Ascending aorta (tissue), 2 donors: ENCODE measurements at regions of chr3 and their contacts with region 1.

Region 1: GRCh38 chr3:141231101-141231935 is at the start of gene PXYLP1:
- DNase-seq: peak; percentile 77 to 97
- H3K4me3 ChIP-seq: peak within 1 kb of the TSS; percentile 61 to 96
- H3K27ac ChIP-seq: peak within 1 kb of the TSS; percentile 79 to 85
- H3K4me1 ChIP-seq: peaks cover 0 to 11% of the 10 kb centered on the region in 2 donors
- H3K27me3 ChIP-seq: no peaks in the 10 kb centered on the region
- CTCF ChIP-seq: peak; percentile 27 to 97 (median 46)
- total RNA-seq, gene PXYLP1: 14.2 TPM

Region 2: DNA sequence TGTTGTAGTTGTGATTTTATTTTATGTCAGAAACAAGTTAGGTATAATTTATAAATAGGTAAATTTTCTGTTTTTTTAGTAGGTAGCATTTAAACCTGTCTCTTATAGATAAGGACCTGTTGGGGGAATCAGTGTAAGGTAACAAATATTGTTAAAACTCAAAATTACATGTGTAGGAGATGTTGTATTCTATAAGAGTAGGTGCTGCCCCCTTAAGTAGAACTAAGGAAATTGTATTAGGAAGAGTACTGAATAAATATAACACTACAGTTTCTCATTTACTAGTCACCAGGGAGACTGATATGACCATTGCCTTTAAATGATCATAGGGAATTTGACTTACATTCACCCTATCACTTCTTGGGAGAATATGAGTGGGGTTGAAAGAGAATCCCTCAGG is 258.5 kb before region 1 on chr3:
- intact Hi-C with region 1: no loop called
- DNase-seq: no peak
- H3K4me3 ChIP-seq: no peak overlapping the region
- H3K27ac ChIP-seq: no peak overlapping the region
- H3K4me1 ChIP-seq: no peaks in the 10 kb centered on the region
- H3K27me3 ChIP-seq: no peaks in the 10 kb centered on the region
- CTCF ChIP-seq: peak in 1 of 3 experiments; percentile 18

Region 3: GRCh38 chr3:141084250-141084649 is 147.1 kb before region 1 on chr3:
- intact Hi-C with region 1: no loop called
- DNase-seq: no peak
- H3K4me3 ChIP-seq: no peak overlapping the region
- H3K27ac ChIP-seq: peak overlapping the region; percentile 61 to 76
- H3K4me1 ChIP-seq: peaks cover 0 to 9% of the 10 kb centered on the region in 2 donors
- H3K27me3 ChIP-seq: no peaks in the 10 kb centered on the region
- CTCF ChIP-seq: no peak

Region 4: DNA sequence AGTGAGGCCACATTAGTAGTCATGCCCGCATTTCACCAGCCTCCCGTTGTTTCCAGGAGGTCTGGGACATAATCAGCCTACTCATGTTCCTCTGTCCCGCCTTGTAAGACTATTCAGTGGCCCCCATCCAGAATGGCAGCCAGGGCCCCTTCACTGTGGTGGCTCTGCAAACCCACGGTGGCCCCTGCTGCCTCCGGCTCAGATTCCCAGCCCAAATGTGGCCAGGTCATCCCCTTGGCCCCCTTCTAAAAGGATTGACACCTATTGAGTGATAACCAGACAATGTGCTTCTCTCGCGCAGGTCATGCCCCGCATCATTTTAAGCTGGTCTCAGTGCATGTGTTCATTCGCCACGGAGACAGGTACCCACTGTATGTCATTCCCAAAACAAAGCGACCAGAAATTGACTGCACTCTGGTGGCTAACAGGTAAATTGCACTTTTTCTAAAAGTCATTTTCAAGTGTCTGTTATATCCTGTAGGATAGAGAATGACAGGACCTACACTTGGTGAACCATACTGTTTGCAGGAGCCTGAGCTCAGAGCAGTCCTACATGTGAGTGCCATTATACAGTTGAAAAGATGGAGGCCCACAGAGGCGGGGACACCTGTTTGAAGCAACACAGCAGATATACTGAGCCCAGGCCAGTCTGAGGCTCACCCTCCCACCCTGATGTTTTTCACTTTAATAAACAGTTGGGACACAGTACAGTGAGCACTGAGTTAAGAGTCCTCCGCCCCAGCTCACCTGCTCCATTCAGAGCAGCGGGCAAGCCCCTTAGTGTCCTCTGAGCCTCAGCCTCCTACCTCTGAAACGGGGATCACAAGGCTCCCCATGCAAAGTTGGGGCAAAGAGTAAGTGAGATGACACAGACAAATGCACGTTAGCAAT is 48.0 kb after region 1 on chr3:
- intact Hi-C with region 1: loop called (anchors 1 kb)
- DNase-seq: peak in 1 of 2 donors; percentile 63
- H3K4me3 ChIP-seq: no peak overlapping the region
- H3K27ac ChIP-seq: peak overlapping the region; percentile 83
- H3K4me1 ChIP-seq: peaks cover 12 to 23% of the 10 kb centered on the region in 2 donors
- H3K27me3 ChIP-seq: no peaks in the 10 kb centered on the region
- CTCF ChIP-seq: peak; percentile 57 to 69 (median 57)

Region 5: GRCh38 chr3:141311496-141312353 is 80.4 kb after region 1 on chr3:
- intact Hi-C with region 1: loop called (anchors 2 kb)
- DNase-seq: peak; percentile 95 to 99
- H3K4me3 ChIP-seq: peak overlapping the region; percentile 59 to 89
- H3K27ac ChIP-seq: peak overlapping the region; percentile 63 to 82
- H3K4me1 ChIP-seq: peaks cover 0 to 8% of the 10 kb centered on the region in 2 donors
- H3K27me3 ChIP-seq: no peaks in the 10 kb centered on the region
- CTCF ChIP-seq: peak; percentile 72 to 85 (median 76)

Region 6: GRCh38 chr3:141452036-141452435 is 220.7 kb after region 1 on chr3:
- intact Hi-C with region 1: loop called (anchors 2 kb)
- DNase-seq: no peak
- H3K4me3 ChIP-seq: no peak overlapping the region
- H3K27ac ChIP-seq: peak overlapping the region; percentile 20 to 27
- H3K4me1 ChIP-seq: peaks cover 0 to 26% of the 10 kb centered on the region in 2 donors
- H3K27me3 ChIP-seq: no peaks in the 10 kb centered on the region
- CTCF ChIP-seq: peak; percentile 66 to 86 (median 73)

Region 7: DNA sequence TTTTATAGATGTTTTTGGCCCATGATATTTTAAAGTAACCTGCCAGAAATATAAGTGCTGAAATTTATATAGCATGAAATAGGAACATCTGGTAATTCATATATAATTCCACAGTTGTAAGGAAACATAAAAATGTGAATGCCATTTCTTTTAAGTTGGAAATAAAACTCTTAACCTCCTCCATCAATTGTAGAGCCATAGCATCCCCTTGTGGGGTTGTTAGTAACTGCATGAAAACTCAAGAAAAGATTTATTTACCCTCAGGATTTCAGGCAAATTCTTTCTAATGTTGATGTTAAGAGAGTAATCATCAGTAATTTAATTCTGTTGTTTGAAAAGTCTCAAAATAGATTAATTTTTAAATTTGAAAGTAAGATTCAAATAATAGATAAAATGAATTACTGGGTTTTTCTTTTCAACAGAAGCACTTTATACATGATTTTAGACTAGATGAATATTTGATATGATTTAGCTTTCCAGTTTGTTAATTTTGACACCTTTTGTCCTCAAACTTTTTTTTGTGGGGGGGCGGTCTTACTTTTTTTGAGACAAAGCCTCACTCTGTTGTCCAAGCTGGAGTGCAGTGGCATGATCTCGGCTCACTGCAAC is 330.2 kb after region 1 on chr3:
- intact Hi-C with region 1: loop called (anchors 5 kb)
- DNase-seq: no peak
- H3K4me3 ChIP-seq: no peak overlapping the region
- H3K27ac ChIP-seq: no peak overlapping the region
- H3K4me1 ChIP-seq: no peaks in the 10 kb centered on the region
- H3K27me3 ChIP-seq: no peaks in the 10 kb centered on the region
- CTCF ChIP-seq: peak; percentile 91 to 94 (median 94)